ENCODE measurements at regions of chr18 and their contacts with region 1.

Region 1: DNA sequence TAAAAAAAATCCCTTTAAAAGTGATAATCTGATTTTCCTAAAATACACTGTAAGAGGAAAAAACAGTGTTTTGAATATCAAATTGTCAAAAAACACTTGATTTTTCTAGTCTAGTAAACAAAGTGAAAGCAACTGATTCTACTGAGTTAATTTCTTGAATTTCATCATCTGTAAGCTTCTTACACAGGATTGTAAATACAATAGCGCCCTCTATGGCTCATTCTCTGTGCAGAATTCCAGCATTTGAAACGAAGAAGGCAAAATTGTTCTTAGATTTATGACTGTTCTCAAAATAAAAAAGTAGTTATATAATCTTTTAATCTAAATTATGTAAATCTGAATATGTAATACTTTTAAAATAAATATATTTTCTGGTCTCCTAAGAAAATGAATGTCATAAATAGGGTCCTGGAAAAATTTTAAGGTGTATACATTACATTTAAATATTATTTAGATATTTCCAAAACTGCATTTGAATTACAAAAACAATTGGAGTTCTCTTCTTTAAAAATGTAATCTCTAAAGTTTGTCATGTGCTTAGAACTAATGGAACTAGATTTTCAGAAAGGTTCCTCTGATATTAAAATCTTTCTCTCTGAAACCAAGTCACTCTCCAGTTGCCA is 176.9 kb upstream of the MC4R start:
- DNase-seq: no peak
- ATAC-seq: no peak
- H3K4me3 Mint-ChIP-seq: no peak overlapping the region
- H3K27ac Mint-ChIP-seq: no peak overlapping the region
- H3K4me1 Mint-ChIP-seq: no peaks in the 10 kb centered on the region
- H3K27me3 Mint-ChIP-seq: no peaks in the 10 kb centered on the region
- CTCF ChIP-seq: peak; percentile 78

Region 2: GRCh38 chr18:59249205-59249774 is 1300.2 kb before region 1 on chr18:
- CTCF ChIA-PET with region 1: no interaction called
- POLR2A ChIA-PET with region 1: no interaction called
- intact Hi-C with region 1: loop called (anchors 2 kb)
- DNase-seq: no peak
- ATAC-seq: peak; percentile 49
- H3K4me3 Mint-ChIP-seq: no peak overlapping the region
- H3K27ac Mint-ChIP-seq: no peak overlapping the region
- H3K4me1 Mint-ChIP-seq: no peaks in the 10 kb centered on the region
- H3K27me3 Mint-ChIP-seq: peaks cover 37% of the 10 kb centered on the region
- CTCF ChIP-seq: no peak

Region 3: GRCh38 chr18:59631583-59632181 is 917.8 kb before region 1 on chr18:
- CTCF ChIA-PET with region 1: no interaction called
- POLR2A ChIA-PET with region 1: no interaction called
- intact Hi-C with region 1: loop called (anchors 1 kb)
- DNase-seq: no peak
- ATAC-seq: no peak
- H3K4me3 Mint-ChIP-seq: no peak overlapping the region
- H3K27ac Mint-ChIP-seq: no peak overlapping the region
- H3K4me1 Mint-ChIP-seq: no peaks in the 10 kb centered on the region
- H3K27me3 Mint-ChIP-seq: peaks cover 10% of the 10 kb centered on the region
- CTCF ChIP-seq: no peak

Region 4: DNA sequence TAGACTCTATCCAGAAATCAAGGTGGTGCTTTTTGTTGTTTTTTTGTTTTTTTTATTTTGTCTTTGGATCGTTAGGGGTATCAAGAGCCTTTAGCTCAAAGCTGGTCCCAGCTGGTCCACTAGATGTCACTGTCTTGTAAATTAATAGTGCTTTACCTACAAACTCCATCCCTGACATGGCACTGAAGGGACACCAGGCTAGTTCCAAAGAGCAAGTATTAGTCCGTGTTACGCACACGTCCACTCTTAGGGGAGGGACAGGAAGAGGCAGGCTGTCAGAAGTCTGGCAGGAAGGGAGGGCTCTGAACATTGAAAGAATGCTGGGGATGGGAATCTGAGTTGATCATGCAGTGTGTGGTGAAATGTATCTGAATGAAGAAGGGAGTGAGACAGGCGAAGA is 766.3 kb before region 1 on chr18:
- CTCF ChIA-PET with region 1: interaction called, 9 read pairs
- POLR2A ChIA-PET with region 1: no interaction called
- intact Hi-C with region 1: loop called (anchors 1 kb)
- DNase-seq: no peak
- ATAC-seq: no peak
- H3K4me3 Mint-ChIP-seq: no peak overlapping the region
- H3K27ac Mint-ChIP-seq: no peak overlapping the region
- H3K4me1 Mint-ChIP-seq: no peaks in the 10 kb centered on the region
- H3K27me3 Mint-ChIP-seq: peaks cover 5% of the 10 kb centered on the region
- CTCF ChIP-seq: no peak

Region 5: GRCh38 chr18:59988098-59988706 is 561.2 kb before region 1 on chr18:
- CTCF ChIA-PET with region 1: interaction called, 5 read pairs
- POLR2A ChIA-PET with region 1: no interaction called
- intact Hi-C with region 1: loop called (anchors 1 kb)
- DNase-seq: no peak
- ATAC-seq: peak; percentile 64
- H3K4me3 Mint-ChIP-seq: no peak overlapping the region
- H3K27ac Mint-ChIP-seq: no peak overlapping the region
- H3K4me1 Mint-ChIP-seq: no peaks in the 10 kb centered on the region
- H3K27me3 Mint-ChIP-seq: peaks cover 17% of the 10 kb centered on the region
- CTCF ChIP-seq: peak; percentile 100

Region 6: DNA sequence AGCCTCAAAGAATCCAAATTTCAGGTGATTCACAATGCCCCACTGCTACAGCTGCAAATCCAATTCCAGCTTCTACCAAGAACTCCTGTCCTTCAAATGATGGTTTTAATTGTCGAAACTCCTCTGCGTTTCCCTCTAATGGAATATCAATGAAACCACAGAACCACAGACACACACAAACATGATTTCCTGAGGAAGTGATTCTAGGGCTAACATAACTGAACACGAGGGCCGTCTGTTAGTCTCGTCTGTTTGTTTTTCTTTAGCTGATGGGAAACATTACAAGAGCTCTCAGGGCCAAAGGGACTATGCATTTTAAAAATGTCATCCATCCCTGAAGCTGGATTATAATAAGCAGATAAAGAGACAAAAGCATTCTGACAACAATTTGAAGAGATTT is 1283.9 kb after region 1 on chr18:
- CTCF ChIA-PET with region 1: no interaction called
- POLR2A ChIA-PET with region 1: no interaction called
- intact Hi-C with region 1: no loop called
- DNase-seq: no peak
- ATAC-seq: no peak
- H3K4me3 Mint-ChIP-seq: no peak overlapping the region
- H3K27ac Mint-ChIP-seq: no peak overlapping the region
- H3K4me1 Mint-ChIP-seq: peaks cover 14% of the 10 kb centered on the region
- H3K27me3 Mint-ChIP-seq: peaks cover 31% of the 10 kb centered on the region
- CTCF ChIP-seq: no peak

Measured in activated B cell treated with CpG ODN at 0.5 μM for 24 hours (primary cell).